Esophagus squamous epithelium (tissue), 5 donors: ENCODE measurements at regions of chr22 and their contacts with region 1.

Region 1: GRCh38 chr22:34414484-34415440 is 494.5 kb upstream of the LARGE1 start:
- DNase-seq: no peak
- H3K4me3 ChIP-seq: no peak overlapping the region
- H3K27ac ChIP-seq: no peak overlapping the region
- H3K4me1 ChIP-seq: no peaks in the 10 kb centered on the region
- H3K27me3 ChIP-seq: no peaks in the 10 kb centered on the region
- CTCF ChIP-seq: peak in 5 of 6 experiments; percentile 57 to 83 (median 73)
- POLR2A ChIP-seq: no peak

Region 2: DNA sequence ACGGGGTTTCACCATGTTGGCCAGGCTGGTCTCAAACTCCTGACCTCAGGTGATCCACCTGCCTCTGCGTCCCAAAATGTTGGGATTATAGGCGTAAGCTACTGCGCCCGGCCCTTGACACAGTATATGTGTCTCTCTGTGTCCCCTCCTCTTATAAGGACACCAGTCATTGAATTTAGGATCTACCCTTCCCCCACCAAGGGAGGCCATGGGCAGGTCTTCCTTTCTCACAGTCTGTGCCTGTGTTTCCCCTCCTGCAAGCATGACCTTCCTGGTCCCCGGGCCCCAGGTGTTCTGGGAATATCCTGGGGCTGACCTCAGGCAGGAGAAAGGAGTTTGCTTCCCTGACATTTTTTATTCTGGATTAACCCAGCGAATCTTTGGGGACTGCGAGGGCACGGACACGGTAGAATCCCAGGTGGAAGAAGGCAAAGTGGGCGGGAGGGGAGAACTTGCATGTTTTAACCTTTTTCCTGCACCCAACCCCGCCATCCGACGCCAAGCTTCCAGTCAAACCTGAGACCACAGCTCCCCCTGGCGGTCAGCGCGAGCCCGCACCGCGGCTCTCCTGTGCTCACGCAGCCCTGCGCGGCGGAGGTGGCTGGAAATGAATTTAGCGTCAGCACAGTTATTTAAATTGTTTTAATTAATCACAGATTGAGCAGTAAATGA is 609.1 kb after region 1 on chr22:
- intact Hi-C with region 1: loop called (anchors 5 kb)
- DNase-seq: no peak
- H3K4me3 ChIP-seq: no peak overlapping the region
- H3K27ac ChIP-seq: no peak overlapping the region
- H3K4me1 ChIP-seq: peaks cover 0 to 22% (median 0%) of the 10 kb centered on the region in 3 donors
- H3K27me3 ChIP-seq: peaks cover 0 to 49% (median 0%) of the 10 kb centered on the region in 4 donors
- CTCF ChIP-seq: peak; percentile 53 to 94 (median 87)
- POLR2A ChIP-seq: no peak

Region 3: GRCh38 chr22:35140879-35141745 is 726.4 kb after region 1 on chr22:
- intact Hi-C with region 1: loop called (anchors 10 kb)
- DNase-seq: no peak
- H3K4me3 ChIP-seq: no peak overlapping the region
- H3K27ac ChIP-seq: no peak overlapping the region
- H3K4me1 ChIP-seq: no peaks in the 10 kb centered on the region
- H3K27me3 ChIP-seq: peaks cover 0 to 16% (median 0%) of the 10 kb centered on the region in 4 donors
- CTCF ChIP-seq: no peak
- POLR2A ChIP-seq: no peak